Activated CD4-positive, alpha-beta T cell treated with anti-CD3 and anti-CD28 coated beads, Interleukin-2, amount 10 ng/mL, durations not matched to agents 24 days and 14 days (primary cell): ENCODE measurements at regions of chr19 and their contacts with region 1.

Region 1: GRCh38 chr19:21851596-21852345 is 15.8 kb upstream of the ZNF43 start:
- DNase-seq: peak; percentile 95
- H3K4me3 Mint-ChIP-seq: peak overlapping the region; percentile 92
- H3K27ac Mint-ChIP-seq: peak overlapping the region; percentile 93
- H3K4me1 Mint-ChIP-seq: peaks cover 11% of the 10 kb centered on the region
- H3K27me3 Mint-ChIP-seq: no peaks in the 10 kb centered on the region

Region 2: DNA sequence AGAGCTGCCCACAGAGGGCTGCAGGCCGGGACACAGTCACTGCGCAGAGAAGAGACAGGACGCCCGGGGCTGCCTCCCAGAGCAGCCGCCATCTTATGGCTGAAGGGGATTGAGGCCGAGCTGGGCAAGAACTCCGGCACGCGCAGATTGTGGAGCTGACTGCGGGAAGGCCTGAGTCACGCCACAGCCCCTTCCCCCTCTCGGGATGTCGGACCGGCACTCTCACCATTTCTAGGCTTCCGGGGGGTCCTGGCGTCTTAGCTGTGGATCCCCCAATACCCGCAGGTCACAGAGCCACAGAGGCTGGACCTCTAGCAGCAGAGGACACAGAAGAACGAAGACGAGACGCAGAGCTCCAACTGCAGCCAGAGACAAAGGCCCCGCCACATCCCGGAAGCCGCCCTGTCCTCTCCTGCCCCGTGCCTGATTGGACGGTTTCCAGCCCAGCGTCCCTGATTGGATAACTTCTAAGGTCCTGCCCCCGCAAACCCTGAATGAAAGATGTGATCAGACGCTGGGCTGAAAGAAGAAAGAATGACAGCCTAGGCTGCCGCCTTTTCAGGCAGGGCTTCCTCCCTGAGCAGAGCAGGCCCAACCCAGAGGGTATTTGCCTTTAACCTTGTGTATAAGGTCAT is 15.8 kb before region 1 on chr19 and contains the start of gene ZNF43:
- intact Hi-C with region 1: loop called (anchors 1 kb)
- DNase-seq: peak; percentile 96
- H3K4me3 Mint-ChIP-seq: peak within 1 kb of the TSS; percentile 100
- H3K27ac Mint-ChIP-seq: peak within 1 kb of the TSS; percentile 100
- H3K4me1 Mint-ChIP-seq: peaks cover 3% of the 10 kb centered on the region
- H3K27me3 Mint-ChIP-seq: no peaks in the 10 kb centered on the region
- total RNA-seq, gene ZNF43: 30.3 and 33.3 TPM in 2 replicates

Region 3: GRCh38 chr19:21891081-21891480 is 39.3 kb after region 1 on chr19:
- intact Hi-C with region 1: no loop called
- DNase-seq: no peak
- H3K4me3 Mint-ChIP-seq: no peak overlapping the region
- H3K27ac Mint-ChIP-seq: no peak overlapping the region
- H3K4me1 Mint-ChIP-seq: no peaks in the 10 kb centered on the region
- H3K27me3 Mint-ChIP-seq: no peaks in the 10 kb centered on the region